CD8-positive, alpha-beta T cell (primary cell): ENCODE measurements at regions of chr2 and their contacts with region 1.

Region 1: GRCh38 chr2:70861777-70862625 is 26.4 kb upstream of the CD207 start:
- DNase-seq: peak; percentile 43 to 80 (median 71)
- ATAC-seq: peak; percentile 87
- H3K4me3 ChIP-seq: no peak overlapping the region
- H3K4me3 Mint-ChIP-seq: no peak overlapping the region
- H3K27ac ChIP-seq: no peak overlapping the region
- H3K27ac Mint-ChIP-seq: no peak overlapping the region
- H3K4me1 ChIP-seq: peaks cover 3% of the 10 kb centered on the region
- H3K4me1 Mint-ChIP-seq: peaks cover 5% of the 10 kb centered on the region
- H3K27me3 ChIP-seq: peaks cover 2 to 4% of the 10 kb centered on the region in 2 experiments
- H3K27me3 Mint-ChIP-seq: peaks cover 33% of the 10 kb centered on the region
- CTCF ChIP-seq: peak; percentile 73

Region 2: GRCh38 chr2:70212298-70212974 is 649.6 kb before region 1 on chr2:
- CTCF ChIA-PET with region 1: no interaction called
- POLR2A ChIA-PET with region 1: no interaction called
- intact Hi-C with region 1: no loop called
- DNase-seq: no peak
- ATAC-seq: no peak
- H3K4me3 ChIP-seq: no peak overlapping the region
- H3K4me3 Mint-ChIP-seq: no peak overlapping the region
- H3K27ac ChIP-seq: no peak overlapping the region
- H3K27ac Mint-ChIP-seq: peak overlapping the region; percentile 34
- H3K4me1 ChIP-seq: no peaks in the 10 kb centered on the region
- H3K4me1 Mint-ChIP-seq: peaks cover 3% of the 10 kb centered on the region
- H3K27me3 ChIP-seq: no peaks in the 10 kb centered on the region
- H3K27me3 Mint-ChIP-seq: no peaks in the 10 kb centered on the region
- CTCF ChIP-seq: no peak

Region 3: DNA sequence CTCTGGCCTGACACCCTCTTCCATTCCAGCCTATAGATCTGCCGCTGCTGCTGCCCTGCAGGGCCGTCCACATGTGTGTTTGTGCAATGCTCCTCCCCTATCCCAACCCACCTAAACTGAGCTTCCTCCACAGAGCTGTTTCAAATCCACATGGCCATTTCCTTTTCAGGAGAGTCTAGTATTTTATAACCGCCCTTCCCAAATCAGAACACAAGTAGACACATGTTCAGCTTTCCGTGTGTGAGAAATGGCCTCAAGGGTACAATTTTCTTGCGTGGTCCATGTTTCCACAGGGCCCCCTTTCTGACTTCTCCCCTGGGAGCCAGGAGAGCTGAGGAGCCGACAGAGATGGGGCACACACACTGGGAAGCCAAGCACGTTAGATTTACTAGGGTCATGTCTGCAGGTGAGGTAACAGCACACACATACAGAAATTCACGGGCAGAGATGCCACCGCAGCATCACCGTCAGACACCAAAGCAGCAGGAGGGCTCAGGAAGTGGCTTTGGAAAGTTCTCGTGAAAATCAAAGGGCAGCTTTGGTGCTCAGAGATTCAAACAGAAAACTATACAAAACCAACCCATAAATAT is 205.5 kb before region 1 on chr2:
- CTCF ChIA-PET with region 1: no interaction called
- POLR2A ChIA-PET with region 1: no interaction called
- intact Hi-C with region 1: loop called in 1 of 2 experiments (anchors 5 kb)
- DNase-seq: peak in 7 of 9 experiments; percentile 11 to 79 (median 57)
- ATAC-seq: peak; percentile 84
- H3K4me3 ChIP-seq: no peak overlapping the region
- H3K4me3 Mint-ChIP-seq: peak overlapping the region; percentile 10
- H3K27ac ChIP-seq: peak overlapping the region in 1 of 2 experiments; percentile 13
- H3K27ac Mint-ChIP-seq: peak overlapping the region; percentile 77
- H3K4me1 ChIP-seq: peaks cover 29% of the 10 kb centered on the region
- H3K4me1 Mint-ChIP-seq: peaks cover 37% of the 10 kb centered on the region
- H3K27me3 ChIP-seq: no peaks in the 10 kb centered on the region
- H3K27me3 Mint-ChIP-seq: peaks cover 13% of the 10 kb centered on the region
- CTCF ChIP-seq: no peak

Region 4: GRCh38 chr2:70789304-70790135 is 72.5 kb before region 1 on chr2:
- CTCF ChIA-PET with region 1: interaction called, 4 read pairs
- POLR2A ChIA-PET with region 1: no interaction called
- intact Hi-C with region 1: loop called (anchors 5 kb)
- DNase-seq: peak; percentile 30 to 78 (median 67)
- ATAC-seq: peak; percentile 73
- H3K4me3 ChIP-seq: peak overlapping the region; percentile 32 to 36
- H3K4me3 Mint-ChIP-seq: peak overlapping the region; percentile 82
- H3K27ac ChIP-seq: no peak overlapping the region
- H3K27ac Mint-ChIP-seq: no peak overlapping the region
- H3K4me1 ChIP-seq: peaks cover 8% of the 10 kb centered on the region
- H3K4me1 Mint-ChIP-seq: peaks cover 13% of the 10 kb centered on the region
- H3K27me3 ChIP-seq: peaks cover 7 to 11% of the 10 kb centered on the region in 2 experiments
- H3K27me3 Mint-ChIP-seq: peaks cover 51% of the 10 kb centered on the region
- CTCF ChIP-seq: peak; percentile 54

Region 5: GRCh38 chr2:70806013-70806412 is 56.0 kb before region 1 on chr2:
- CTCF ChIA-PET with region 1: no interaction called
- POLR2A ChIA-PET with region 1: no interaction called
- intact Hi-C with region 1: no loop called
- DNase-seq: no peak
- ATAC-seq: no peak
- H3K4me3 ChIP-seq: no peak overlapping the region
- H3K4me3 Mint-ChIP-seq: no peak overlapping the region
- H3K27ac ChIP-seq: no peak overlapping the region
- H3K27ac Mint-ChIP-seq: no peak overlapping the region
- H3K4me1 ChIP-seq: no peaks in the 10 kb centered on the region
- H3K4me1 Mint-ChIP-seq: no peaks in the 10 kb centered on the region
- H3K27me3 ChIP-seq: no peaks in the 10 kb centered on the region
- H3K27me3 Mint-ChIP-seq: peaks cover 2% of the 10 kb centered on the region
- CTCF ChIP-seq: no peak

Region 6: DNA sequence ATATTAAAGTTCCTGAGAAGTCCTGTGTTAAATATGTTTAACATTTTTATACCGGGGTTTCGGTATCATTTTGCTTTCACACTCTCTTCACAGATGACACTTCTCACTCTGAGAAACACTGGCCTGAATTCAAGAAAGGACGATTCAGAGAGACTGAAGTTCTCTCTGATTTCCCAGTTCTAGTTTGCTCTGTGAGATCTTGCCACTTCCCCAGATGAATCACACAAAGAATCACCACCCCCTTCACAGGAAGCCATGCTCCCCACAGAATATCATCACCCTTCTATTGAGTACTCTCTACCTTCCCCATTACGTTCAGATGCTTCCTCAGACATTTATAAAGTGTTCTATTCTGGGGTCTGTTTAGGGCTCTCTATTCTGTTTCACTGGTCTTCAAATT is 10.3 kb before region 1 on chr2:
- CTCF ChIA-PET with region 1: interaction called, 13 read pairs
- POLR2A ChIA-PET with region 1: no interaction called
- intact Hi-C with region 1: no loop called
- DNase-seq: peak in 5 of 9 experiments; percentile 29 to 76 (median 54)
- ATAC-seq: peak; percentile 94
- H3K4me3 ChIP-seq: no peak overlapping the region
- H3K4me3 Mint-ChIP-seq: peak overlapping the region; percentile 15
- H3K27ac ChIP-seq: peak overlapping the region in 1 of 2 experiments; percentile 57
- H3K27ac Mint-ChIP-seq: peak overlapping the region; percentile 64
- H3K4me1 ChIP-seq: peaks cover 19% of the 10 kb centered on the region
- H3K4me1 Mint-ChIP-seq: peaks cover 22% of the 10 kb centered on the region
- H3K27me3 ChIP-seq: no peaks in the 10 kb centered on the region
- H3K27me3 Mint-ChIP-seq: no peaks in the 10 kb centered on the region
- CTCF ChIP-seq: no peak

Region 7: DNA sequence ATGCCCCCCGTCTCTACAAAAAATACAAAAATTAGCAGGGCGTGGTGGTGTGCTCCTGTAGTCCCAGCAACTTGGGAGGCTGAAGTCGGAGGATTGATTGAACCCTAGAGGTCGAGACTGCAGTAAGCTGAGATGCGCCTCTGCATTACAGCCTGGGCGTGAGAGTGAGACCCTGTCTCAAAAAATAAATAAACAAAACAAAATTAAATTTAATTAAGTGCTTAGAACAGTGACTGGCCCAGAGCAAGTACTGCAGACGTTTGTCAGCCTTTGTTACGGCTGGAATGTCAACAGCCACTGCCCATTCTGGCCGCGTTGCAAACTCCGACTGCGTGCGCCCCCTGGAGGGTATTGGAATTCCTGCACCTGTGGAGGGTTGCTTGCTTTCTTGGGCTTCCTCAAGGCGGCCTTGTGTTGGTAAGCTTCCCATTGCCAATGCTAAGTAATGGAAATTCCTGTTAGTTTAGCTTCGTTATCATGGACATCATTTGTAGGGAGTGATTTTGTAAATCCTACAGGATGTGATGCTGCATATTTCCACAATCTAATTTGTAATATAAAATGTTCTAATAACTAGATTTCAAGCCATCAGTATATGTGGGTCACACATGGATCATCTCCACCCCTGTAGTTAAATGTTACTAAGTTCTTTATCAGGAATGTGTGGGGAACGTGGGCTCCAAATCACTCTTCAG is 57.8 kb after region 1 on chr2:
- CTCF ChIA-PET with region 1: interaction called, 7 read pairs
- POLR2A ChIA-PET with region 1: no interaction called
- intact Hi-C with region 1: loop called in 1 of 2 experiments (anchors 2 kb)
- DNase-seq: peak; percentile 39 to 80 (median 71)
- ATAC-seq: peak; percentile 61
- H3K4me3 ChIP-seq: no peak overlapping the region
- H3K4me3 Mint-ChIP-seq: no peak overlapping the region
- H3K27ac ChIP-seq: no peak overlapping the region
- H3K27ac Mint-ChIP-seq: no peak overlapping the region
- H3K4me1 ChIP-seq: no peaks in the 10 kb centered on the region
- H3K4me1 Mint-ChIP-seq: no peaks in the 10 kb centered on the region
- H3K27me3 ChIP-seq: peaks cover 0 to 3% of the 10 kb centered on the region in 2 experiments
- H3K27me3 Mint-ChIP-seq: peaks cover 34% of the 10 kb centered on the region
- CTCF ChIP-seq: peak; percentile 86

Region 8: DNA sequence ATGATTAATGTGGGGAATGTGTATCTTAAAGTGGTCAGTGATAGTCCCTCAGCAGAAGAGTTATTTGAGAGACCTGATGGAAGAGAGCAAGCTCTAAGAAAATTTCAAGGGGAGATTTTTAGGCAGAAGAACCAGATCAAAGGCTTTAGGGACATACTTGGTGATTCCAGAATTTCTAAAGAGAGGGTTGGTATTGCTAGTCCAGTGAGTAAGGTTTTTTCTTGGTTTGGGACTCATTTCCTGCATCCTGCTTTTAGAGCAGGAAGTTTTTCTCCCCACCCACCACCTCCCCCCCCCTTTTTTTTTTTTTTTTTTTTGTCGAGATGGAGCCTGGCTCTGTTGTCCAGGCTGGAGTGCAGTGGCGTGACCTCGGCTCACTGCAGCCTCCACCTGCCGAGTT is 548.7 kb after region 1 on chr2:
- CTCF ChIA-PET with region 1: no interaction called
- POLR2A ChIA-PET with region 1: no interaction called
- intact Hi-C with region 1: no loop called
- DNase-seq: no peak
- ATAC-seq: no peak
- H3K4me3 ChIP-seq: no peak overlapping the region
- H3K4me3 Mint-ChIP-seq: no peak overlapping the region
- H3K27ac ChIP-seq: peak overlapping the region in 1 of 2 experiments; percentile 6
- H3K27ac Mint-ChIP-seq: peak overlapping the region; percentile 71
- H3K4me1 ChIP-seq: no peaks in the 10 kb centered on the region
- H3K4me1 Mint-ChIP-seq: peaks cover 3% of the 10 kb centered on the region
- H3K27me3 ChIP-seq: no peaks in the 10 kb centered on the region
- H3K27me3 Mint-ChIP-seq: no peaks in the 10 kb centered on the region
- CTCF ChIP-seq: no peak